ENCODE measurements at regions of chr14 and their contacts with region 1.

Region 1: DNA sequence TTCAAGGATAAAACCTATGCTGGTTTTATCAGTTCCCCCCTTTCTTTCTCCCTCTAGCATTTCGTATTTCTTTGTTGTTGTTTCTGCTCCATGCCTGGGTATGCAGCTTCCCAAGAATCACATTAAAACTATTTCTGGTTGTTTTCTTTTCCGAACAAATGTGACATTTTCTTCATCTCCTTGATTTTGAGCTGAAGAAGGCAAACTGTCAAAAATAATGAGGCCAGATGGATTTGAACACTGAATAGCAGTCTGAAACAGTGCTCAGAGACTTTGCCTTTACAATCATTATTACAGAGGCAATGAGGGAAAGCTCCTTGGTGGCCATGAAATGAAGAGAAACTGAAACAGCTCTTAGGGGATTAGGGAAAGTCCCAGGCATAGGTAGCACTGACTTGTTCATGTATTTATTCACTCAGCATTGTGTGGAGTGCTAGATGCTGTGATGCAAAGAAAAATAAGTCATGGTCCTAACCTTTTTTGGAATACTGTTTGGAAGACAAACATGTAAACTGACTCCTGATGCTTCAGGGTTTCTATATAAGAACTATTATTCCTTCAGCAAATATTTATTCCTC is 319.5 kb downstream of the FUT8 start:
- DNase-seq: peak; percentile 81
- H3K4me3 Mint-ChIP-seq: peak overlapping the region; percentile 68
- H3K27ac Mint-ChIP-seq: peak overlapping the region; percentile 84
- H3K4me1 Mint-ChIP-seq: peaks cover 14% of the 10 kb centered on the region
- H3K27me3 Mint-ChIP-seq: no peaks in the 10 kb centered on the region

Region 2: GRCh38 chr14:65704850-65705249 is 27.2 kb before region 1 on chr14:
- intact Hi-C with region 1: loop called (anchors 1 kb)
- DNase-seq: no peak
- H3K4me3 Mint-ChIP-seq: no peak overlapping the region
- H3K27ac Mint-ChIP-seq: peak overlapping the region; percentile 82
- H3K4me1 Mint-ChIP-seq: peaks cover 14% of the 10 kb centered on the region
- H3K27me3 Mint-ChIP-seq: no peaks in the 10 kb centered on the region

Region 3: DNA sequence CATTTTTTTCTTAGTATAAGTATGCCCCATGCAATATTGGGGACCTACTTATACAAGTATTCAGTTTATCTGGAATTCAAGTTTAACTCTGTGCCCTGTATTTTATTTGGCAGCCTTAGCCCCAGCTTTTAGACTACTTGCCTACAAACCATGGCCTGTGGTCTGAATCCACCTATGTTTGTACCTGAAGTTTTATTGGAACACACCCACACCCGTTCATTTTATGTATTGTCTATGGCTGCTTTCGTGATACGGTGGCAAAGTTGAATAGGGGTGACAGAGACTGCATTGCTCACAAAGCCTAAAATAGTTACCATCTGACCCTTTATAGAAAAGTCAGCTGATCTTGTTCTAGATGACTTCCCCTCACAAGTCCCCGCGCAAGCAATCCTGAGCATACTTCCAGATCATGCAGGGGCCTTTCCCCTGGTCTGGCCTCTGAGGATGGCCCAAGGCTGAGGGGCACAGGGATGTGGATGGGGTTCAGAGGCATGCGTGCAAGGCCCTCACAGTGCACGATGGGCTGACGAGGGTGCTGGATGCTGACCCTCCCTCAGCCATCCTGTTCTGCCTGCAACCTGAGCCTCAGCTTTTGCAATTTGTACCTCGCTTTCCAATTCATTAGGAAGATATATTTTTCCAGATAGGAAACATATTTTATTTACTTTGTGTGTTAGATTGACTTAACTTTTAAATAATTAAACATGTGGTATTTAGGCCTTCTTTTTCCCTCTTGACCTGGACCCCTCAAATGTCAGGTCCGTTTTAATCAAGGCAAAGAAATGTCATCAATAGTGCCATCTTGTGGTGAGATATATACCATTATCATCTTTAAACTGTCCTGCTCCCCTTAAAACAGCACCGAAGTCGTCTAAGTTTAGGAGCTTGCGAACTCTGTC is 226.9 kb after region 1 on chr14:
- intact Hi-C with region 1: loop called (anchors 10 kb)
- DNase-seq: peak; percentile 63
- H3K4me3 Mint-ChIP-seq: no peak overlapping the region
- H3K27ac Mint-ChIP-seq: no peak overlapping the region
- H3K4me1 Mint-ChIP-seq: peaks cover 33% of the 10 kb centered on the region
- H3K27me3 Mint-ChIP-seq: peaks cover 19% of the 10 kb centered on the region